Panc1 (cell line): ENCODE measurements at regions of chr3 and their contacts with region 1.

Region 1: GRCh38 chr3:148366743-148367410 is 330.8 kb upstream of the AGTR1 start:
- DNase-seq: no peak
- ATAC-seq: no peak
- H3K4me3 ChIP-seq: no peak overlapping the region
- H3K27ac ChIP-seq: no peak overlapping the region
- H3K4me1 ChIP-seq: no peaks in the 10 kb centered on the region
- H3K27me3 ChIP-seq: no peaks in the 10 kb centered on the region; the same call in 1 of the 2 replicates
- CTCF ChIP-seq: peak; percentile 18; the same call in 1 of the 2 replicates

Region 2: DNA sequence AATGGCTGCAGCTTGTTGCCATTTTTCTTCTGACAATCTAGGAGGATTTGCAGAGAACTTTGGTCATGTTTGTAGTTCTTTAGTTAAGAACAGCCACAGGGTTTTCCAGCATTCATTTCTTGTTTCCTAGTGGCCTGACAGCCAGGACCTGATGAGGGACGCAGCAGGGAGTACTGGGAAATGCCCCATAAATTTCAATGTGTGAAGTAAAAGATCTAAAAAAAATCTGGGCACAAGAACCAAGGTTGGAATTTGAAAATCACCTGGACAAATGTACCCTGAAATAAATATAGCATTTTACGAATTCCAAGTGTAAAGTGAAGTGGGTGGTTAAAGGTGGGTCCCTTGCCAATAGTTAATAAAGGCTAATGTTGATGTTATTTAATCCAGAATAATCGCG is 762.7 kb before region 1 on chr3:
- CTCF ChIA-PET with region 1: no interaction called
- POLR2A ChIA-PET with region 1: no interaction called
- in situ Hi-C with region 1: no loop called
- intact Hi-C with region 1: no loop called
- DNase-seq: no peak
- ATAC-seq: no peak
- H3K4me3 ChIP-seq: no peak overlapping the region
- H3K27ac ChIP-seq: no peak overlapping the region
- H3K4me1 ChIP-seq: no peaks in the 10 kb centered on the region
- H3K27me3 ChIP-seq: no peaks in the 10 kb centered on the region
- CTCF ChIP-seq: no peak

Region 3: DNA sequence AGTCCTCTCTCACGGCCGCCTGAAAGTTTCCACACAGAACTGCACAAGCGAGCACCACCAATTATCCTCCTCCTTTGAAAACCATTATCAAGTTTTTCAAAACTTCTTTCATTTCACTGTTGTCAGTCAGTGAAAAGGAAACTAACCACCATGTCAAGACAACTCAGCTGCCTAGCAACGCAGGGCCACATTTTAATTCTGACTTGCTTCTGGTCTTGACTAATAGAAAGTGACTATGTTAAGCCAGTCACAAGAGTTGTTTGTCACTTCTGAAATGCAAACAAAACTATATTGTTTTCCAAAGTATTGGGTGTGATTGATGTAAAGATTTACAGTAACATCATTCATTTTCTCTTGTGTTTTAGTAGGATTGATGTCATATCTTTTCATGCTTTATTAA is 281.9 kb before region 1 on chr3:
- CTCF ChIA-PET with region 1: no interaction called
- POLR2A ChIA-PET with region 1: no interaction called
- in situ Hi-C with region 1: no loop called
- intact Hi-C with region 1: loop called (anchors 10 kb)
- DNase-seq: no peak
- ATAC-seq: no peak
- H3K4me3 ChIP-seq: no peak overlapping the region
- H3K27ac ChIP-seq: no peak overlapping the region
- H3K4me1 ChIP-seq: no peaks in the 10 kb centered on the region
- H3K27me3 ChIP-seq: no peaks in the 10 kb centered on the region
- CTCF ChIP-seq: no peak

Region 4: GRCh38 chr3:148389916-148390315 is 23.0 kb after region 1 on chr3:
- CTCF ChIA-PET with region 1: no interaction called
- POLR2A ChIA-PET with region 1: no interaction called
- in situ Hi-C with region 1: no loop called
- intact Hi-C with region 1: no loop called
- DNase-seq: no peak
- ATAC-seq: no peak
- H3K4me3 ChIP-seq: no peak overlapping the region
- H3K27ac ChIP-seq: no peak overlapping the region
- H3K4me1 ChIP-seq: no peaks in the 10 kb centered on the region
- H3K27me3 ChIP-seq: no peaks in the 10 kb centered on the region
- CTCF ChIP-seq: no peak